OCI-LY7 (cell line): ENCODE measurements at regions of chr1 and their contacts with region 1.

Region 1: GRCh38 chr1:43367904-43368645 is at the start of gene ELOVL1:
- DNase-seq: peak; percentile 92
- H3K4me3 ChIP-seq: peak within 1 kb of the TSS; percentile 93
- H3K27ac ChIP-seq: peak within 1 kb of the TSS; percentile 76
- H3K4me1 ChIP-seq: peaks cover 18% of the 10 kb centered on the region
- CTCF ChIP-seq: peak; percentile 63
- total RNA-seq, gene ELOVL1: 24.4 and 35.9 TPM in 2 replicates

Region 2: DNA sequence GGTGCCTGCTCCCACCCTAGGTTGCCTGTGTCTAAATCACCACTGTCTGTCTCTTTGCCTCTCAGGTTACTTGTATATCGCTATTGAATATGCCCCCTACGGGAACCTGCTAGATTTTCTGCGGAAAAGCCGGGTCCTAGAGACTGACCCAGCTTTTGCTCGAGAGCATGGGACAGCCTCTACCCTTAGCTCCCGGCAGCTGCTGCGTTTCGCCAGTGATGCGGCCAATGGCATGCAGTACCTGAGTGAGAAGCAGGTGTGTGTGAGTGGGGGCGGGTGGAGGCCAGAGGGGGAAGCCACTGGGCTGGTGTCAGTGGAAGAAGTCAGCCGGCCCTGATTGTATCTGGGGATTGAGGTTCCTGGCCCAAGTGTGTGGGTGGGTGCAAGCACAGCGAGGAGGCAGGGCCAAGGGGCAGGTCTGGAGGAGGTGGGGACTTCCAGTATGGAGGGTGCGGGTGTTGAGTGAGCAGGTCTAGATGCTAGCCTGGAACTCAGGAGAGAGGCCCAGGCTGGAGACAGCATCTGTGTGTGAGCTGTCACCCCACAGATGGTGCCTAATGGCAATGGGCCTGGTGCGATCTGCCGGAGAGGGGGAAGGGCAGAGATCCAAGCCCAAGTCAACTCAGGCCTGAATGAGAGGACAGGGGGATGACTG is 50.1 kb before region 1 on chr1:
- CTCF ChIA-PET with region 1: no interaction called
- POLR2A ChIA-PET with region 1: no interaction called
- intact Hi-C with region 1: no loop called
- DNase-seq: no peak
- H3K4me3 ChIP-seq: no peak overlapping the region
- H3K27ac ChIP-seq: no peak overlapping the region
- H3K4me1 ChIP-seq: no peaks in the 10 kb centered on the region
- CTCF ChIP-seq: no peak

Region 3: DNA sequence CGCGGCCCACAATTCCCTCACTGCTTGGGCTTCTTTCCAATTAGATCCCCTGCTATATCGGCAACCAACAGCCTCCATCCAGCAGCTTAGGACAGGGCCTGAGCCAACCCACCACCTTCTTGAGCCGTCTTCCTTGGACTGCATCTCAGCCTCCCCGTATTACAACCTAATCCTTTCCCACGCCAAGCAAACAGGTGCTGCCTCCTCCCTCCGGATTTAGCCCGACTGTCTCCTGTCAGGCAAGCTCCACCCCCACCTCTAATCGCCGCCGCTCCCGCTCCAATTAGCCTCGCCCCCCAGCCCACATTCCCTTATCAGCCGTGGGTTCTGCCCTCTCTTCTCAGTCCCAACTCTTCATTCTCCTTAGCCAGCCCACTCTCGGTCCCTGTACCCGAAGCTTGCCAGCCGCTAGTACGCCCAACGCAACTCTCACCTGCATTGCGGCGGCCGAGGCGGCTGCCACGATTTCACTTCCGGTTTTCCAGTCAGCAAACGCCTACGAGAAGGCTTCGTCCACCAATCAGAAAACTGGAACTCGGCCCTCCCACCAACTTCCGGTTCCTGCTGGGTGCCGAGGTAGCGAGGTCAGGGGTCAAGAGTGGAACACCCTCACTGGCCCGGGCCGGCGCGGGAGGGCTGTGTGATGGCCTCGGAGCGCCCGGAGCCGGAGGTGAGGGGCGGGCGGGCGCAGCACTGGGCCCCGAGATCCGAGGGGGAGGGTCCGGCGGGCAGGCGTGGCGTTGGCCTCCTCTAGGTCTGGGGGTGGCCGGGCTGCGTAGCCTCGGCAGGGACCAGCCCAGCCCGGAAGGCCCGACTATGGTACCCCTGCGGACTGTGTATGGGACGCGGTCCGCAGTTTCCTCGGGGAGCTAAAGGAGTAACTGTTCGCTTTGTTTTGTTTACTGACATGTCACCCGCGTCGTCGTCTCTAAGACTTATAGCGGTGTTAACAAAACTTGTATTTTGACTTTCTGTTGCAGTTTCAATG is 21.5 kb after region 1 on chr1 and contains the starts of genes MED8 and SZT2:
- CTCF ChIA-PET with region 1: no interaction called
- POLR2A ChIA-PET with region 1: interaction called, 13 read pairs
- intact Hi-C with region 1: loop called (anchors 1 kb)
- DNase-seq: peak; percentile 95
- H3K4me3 ChIP-seq: peak within 1 kb of the TSS; percentile 88
- H3K27ac ChIP-seq: peak within 1 kb of the TSS; percentile 15
- H3K4me1 ChIP-seq: peaks cover 25% of the 10 kb centered on the region
- CTCF ChIP-seq: no peak
- total RNA-seq, gene MED8: 37.6 and 38.8 TPM in 2 replicates
- total RNA-seq, gene SZT2: 25.2 and 33.7 TPM in 2 replicates